Activated B cell treated with CpG ODN at 0.5 μM for 24 hours (primary cell): ENCODE measurements at regions of chr3 and their contacts with region 1.

Region 1: GRCh38 chr3:17431004-17431403 is 311.4 kb downstream of the TBC1D5 start:
- DNase-seq: no peak
- ATAC-seq: no peak
- H3K4me3 Mint-ChIP-seq: no peak overlapping the region
- H3K27ac Mint-ChIP-seq: no peak overlapping the region
- H3K4me1 Mint-ChIP-seq: no peaks in the 10 kb centered on the region
- H3K27me3 Mint-ChIP-seq: no peaks in the 10 kb centered on the region
- CTCF ChIP-seq: peak; percentile 23

Region 2: DNA sequence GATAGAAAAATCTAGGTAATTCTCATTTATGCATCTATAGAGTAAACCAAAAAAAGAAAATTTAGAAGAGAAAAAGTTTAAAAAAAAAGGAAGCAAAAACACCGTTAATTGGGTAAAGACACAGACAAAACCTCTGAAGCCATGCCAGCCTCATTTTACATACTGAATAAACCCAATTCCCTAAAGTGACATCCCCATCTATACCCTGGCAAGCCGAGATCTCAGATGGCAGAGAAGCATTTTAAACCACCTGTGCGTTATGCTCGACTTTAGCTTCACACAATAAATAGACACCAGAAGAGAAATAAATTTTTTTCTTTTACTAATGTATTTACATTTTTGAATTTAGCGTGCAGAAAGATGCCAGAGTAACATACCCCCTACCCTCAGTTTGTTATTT is 164.2 kb before region 1 on chr3:
- CTCF ChIA-PET with region 1: no interaction called
- POLR2A ChIA-PET with region 1: no interaction called
- intact Hi-C with region 1: no loop called
- DNase-seq: no peak
- ATAC-seq: no peak
- H3K4me3 Mint-ChIP-seq: no peak overlapping the region
- H3K27ac Mint-ChIP-seq: no peak overlapping the region
- H3K4me1 Mint-ChIP-seq: no peaks in the 10 kb centered on the region
- H3K27me3 Mint-ChIP-seq: no peaks in the 10 kb centered on the region
- CTCF ChIP-seq: no peak

Region 3: GRCh38 chr3:17645072-17645698 is 214.2 kb after region 1 on chr3:
- CTCF ChIA-PET with region 1: interaction called, 4 read pairs
- POLR2A ChIA-PET with region 1: no interaction called
- intact Hi-C with region 1: loop called (anchors 5 kb)
- DNase-seq: no peak
- ATAC-seq: no peak
- H3K4me3 Mint-ChIP-seq: no peak overlapping the region
- H3K27ac Mint-ChIP-seq: no peak overlapping the region
- H3K4me1 Mint-ChIP-seq: peaks cover 9% of the 10 kb centered on the region
- H3K27me3 Mint-ChIP-seq: no peaks in the 10 kb centered on the region
- CTCF ChIP-seq: peak; percentile 35